ENCODE measurements at regions of chr11 and their contacts with region 1.

Region 1: GRCh38 chr11:115699733-115700132 is 195.5 kb upstream of the CADM1 start:
- DNase-seq: no peak
- ATAC-seq: peak; percentile 82
- H3K4me3 ChIP-seq: no peak overlapping the region
- H3K27ac ChIP-seq: peak overlapping the region in 1 of 2 donors; percentile 21
- H3K4me1 ChIP-seq: peaks cover 0 to 2% of the 10 kb centered on the region in 2 donors
- H3K27me3 ChIP-seq: no peaks in the 10 kb centered on the region

Region 2: DNA sequence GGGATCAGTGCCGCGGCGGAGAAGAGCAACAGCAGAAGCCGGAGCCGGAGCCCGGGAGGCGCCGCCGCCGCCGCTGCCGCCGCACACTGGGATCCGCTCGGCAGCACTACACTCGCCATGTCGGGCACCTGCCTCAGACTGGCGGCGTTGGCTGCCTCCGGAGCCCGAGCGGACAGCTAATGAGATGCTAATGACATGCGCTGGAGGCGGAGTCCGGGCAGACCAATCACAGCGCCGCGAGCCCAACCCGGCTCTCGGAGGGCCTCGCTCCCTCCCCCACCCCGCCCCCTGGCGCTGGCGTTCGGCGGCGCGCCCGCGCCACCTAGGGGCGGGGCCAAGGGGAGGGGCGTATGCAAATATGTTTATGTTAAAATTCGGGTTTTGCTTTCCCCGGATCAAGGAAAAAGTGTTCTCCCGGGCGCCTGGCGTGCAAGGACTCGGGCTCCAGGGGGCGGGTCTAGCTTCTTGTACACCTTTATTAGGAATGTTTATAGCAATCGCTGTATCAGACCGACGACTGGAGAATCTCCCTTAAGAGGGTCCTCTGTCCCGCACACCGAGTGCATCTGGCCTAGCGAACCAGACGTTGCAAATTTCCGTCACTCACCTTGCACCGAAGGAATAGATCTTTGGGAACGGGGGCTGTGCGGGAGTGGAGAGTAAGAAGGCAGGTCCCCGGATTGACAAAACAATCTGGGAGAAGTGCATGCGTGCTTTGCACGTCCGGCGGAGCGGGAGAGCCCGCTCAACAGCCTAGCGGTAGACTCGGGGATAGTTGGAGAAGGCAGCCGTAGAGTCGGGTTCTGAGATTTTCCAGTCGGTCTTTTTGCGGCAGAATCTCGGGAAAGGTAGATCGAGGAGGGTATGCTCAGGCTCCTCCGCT is 195.2 kb before region 1 on chr11 and contains the start of gene CADM1:
- intact Hi-C with region 1: loop called in 1 of 2 experiments (anchors 5 kb)
- DNase-seq: peak; percentile 95 to 97
- ATAC-seq: peak; percentile 94
- H3K4me3 ChIP-seq: peak within 1 kb of the TSS; percentile 57 to 63
- H3K27ac ChIP-seq: peak within 1 kb of the TSS in 1 of 2 donors; percentile 7
- H3K4me1 ChIP-seq: no peaks in the 10 kb centered on the region
- H3K27me3 ChIP-seq: no peaks in the 10 kb centered on the region
- total RNA-seq, gene CADM1: 7.6 to 9.8 TPM

Region 3: DNA sequence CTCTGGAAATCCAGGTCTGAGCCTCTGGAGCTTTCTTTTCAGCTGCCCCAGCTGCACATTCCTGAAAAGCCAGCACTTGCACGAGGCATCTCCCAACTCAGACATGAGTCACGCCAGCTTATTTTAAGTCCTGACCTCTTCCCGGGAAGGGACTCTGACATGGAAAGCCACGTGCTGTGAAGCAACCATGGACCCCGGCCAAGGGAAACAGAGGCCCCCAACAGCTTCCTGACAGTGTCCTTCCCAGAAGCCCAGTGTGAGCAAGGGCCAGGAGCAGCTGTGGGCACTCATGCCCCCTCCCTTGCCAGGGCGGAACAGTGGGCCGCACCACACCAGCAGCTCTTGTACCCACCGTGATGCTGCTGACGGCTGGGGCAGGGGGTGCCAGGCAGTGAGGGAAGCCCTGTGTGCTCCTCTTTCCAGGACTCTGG is 76.7 kb before region 1 on chr11:
- intact Hi-C with region 1: loop called in 1 of 2 experiments (anchors 5 kb)
- DNase-seq: peak; percentile 86 to 91
- ATAC-seq: peak; percentile 76
- H3K4me3 ChIP-seq: no peak overlapping the region
- H3K27ac ChIP-seq: no peak overlapping the region
- H3K4me1 ChIP-seq: peaks cover 0 to 6% of the 10 kb centered on the region in 2 donors
- H3K27me3 ChIP-seq: no peaks in the 10 kb centered on the region

Measured in aorta (tissue), 5 donors.